Ascending aorta (tissue), 2 donors: ENCODE measurements at regions of chr17 and their contacts with region 1.

Region 1: GRCh38 chr17:39704821-39705551 is 5.1 kb downstream of the ERBB2 start:
- DNase-seq: peak in 1 of 2 donors; percentile 83
- H3K4me3 ChIP-seq: peak overlapping the region in 1 of 2 donors; percentile 38
- H3K27ac ChIP-seq: peak overlapping the region; percentile 83 to 88
- H3K4me1 ChIP-seq: peaks cover 7 to 38% of the 10 kb centered on the region in 2 donors
- H3K27me3 ChIP-seq: no peaks in the 10 kb centered on the region
- CTCF ChIP-seq: peak; percentile 51 to 78 (median 65)

Region 2: DNA sequence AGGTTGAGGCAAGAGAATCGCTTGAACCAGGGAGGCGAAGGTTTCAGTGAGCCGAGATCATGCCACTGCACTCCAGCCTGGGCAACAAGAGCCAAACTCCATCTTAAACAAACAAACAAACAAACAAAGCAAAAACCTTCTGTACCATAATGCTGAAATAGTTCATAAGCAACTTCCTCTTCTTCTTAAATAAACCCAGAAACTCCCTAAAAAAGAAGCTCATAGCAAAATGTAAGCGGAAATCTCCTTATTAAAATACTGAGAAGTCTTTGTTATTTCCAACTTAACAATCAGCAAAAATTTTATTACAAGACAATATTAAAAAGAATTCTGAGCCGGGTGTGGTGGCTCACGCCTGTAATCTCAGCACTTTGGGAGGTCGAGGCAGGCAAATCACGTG is 386.4 kb before region 1 on chr17:
- intact Hi-C with region 1: no loop called
- DNase-seq: no peak
- H3K4me3 ChIP-seq: no peak overlapping the region
- H3K27ac ChIP-seq: no peak overlapping the region
- H3K4me1 ChIP-seq: peaks cover 0 to 4% of the 10 kb centered on the region in 2 donors
- H3K27me3 ChIP-seq: no peaks in the 10 kb centered on the region
- CTCF ChIP-seq: no peak

Region 3: DNA sequence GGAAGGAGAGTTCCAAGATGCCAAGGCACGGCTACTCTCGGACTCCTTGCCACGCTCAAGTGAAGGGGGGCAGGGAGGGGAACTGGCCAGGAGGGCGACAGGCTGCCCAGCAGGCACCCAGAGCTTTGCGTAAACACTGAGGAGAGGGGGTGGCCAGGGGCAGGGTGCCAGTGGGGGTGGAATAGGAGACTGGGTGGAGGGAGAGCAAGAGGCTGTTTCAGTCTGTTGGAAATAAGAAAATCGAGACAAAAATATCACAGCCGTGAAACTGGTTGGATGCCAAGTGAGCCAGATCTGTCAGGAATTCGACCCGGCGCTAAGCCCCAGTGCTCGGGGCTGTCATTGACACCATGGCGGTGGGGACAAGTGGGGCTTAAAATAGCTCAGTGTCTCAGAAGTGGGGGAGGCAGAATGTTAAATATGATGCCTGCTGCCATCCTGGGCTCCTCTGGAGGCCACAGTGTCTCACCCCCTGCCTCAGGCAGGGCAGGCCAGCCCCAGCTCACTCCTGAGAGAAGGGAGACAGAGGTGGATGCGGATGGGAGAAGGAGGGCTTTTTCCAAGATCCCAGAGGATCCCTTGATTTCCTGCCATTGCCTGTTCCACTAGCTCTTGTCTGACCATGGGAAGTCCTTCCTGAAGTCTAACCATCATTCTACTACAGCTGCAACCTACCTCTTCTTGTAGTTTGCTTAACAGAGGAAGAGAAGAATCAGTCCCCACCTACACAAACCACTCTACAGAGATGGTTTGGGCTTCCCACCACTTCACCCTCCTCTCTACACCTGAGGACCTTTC is 27.2 kb before region 1 on chr17:
- intact Hi-C with region 1: loop called (anchors 2 kb)
- DNase-seq: peak; percentile 49 to 92
- H3K4me3 ChIP-seq: peak overlapping the region in 1 of 2 donors; percentile 11
- H3K27ac ChIP-seq: peak overlapping the region; percentile 90 to 95
- H3K4me1 ChIP-seq: peaks cover 23 to 43% of the 10 kb centered on the region in 2 donors
- H3K27me3 ChIP-seq: no peaks in the 10 kb centered on the region
- CTCF ChIP-seq: no peak

Region 4: GRCh38 chr17:39999067-39999466 is 294.1 kb after region 1 on chr17:
- intact Hi-C with region 1: no loop called
- DNase-seq: no peak
- H3K4me3 ChIP-seq: no peak overlapping the region
- H3K27ac ChIP-seq: no peak overlapping the region
- H3K4me1 ChIP-seq: no peaks in the 10 kb centered on the region
- H3K27me3 ChIP-seq: no peaks in the 10 kb centered on the region
- CTCF ChIP-seq: no peak